ENCODE measurements at regions of chr16 and their contacts with region 1.

Region 1: GRCh38 chr16:106623-107324 is 28.7 kb downstream of the MPG start:
- DNase-seq: peak; percentile 34
- H3K4me3 ChIP-seq: no peak overlapping the region
- CTCF ChIP-seq: peak; percentile 81

Region 2: DNA sequence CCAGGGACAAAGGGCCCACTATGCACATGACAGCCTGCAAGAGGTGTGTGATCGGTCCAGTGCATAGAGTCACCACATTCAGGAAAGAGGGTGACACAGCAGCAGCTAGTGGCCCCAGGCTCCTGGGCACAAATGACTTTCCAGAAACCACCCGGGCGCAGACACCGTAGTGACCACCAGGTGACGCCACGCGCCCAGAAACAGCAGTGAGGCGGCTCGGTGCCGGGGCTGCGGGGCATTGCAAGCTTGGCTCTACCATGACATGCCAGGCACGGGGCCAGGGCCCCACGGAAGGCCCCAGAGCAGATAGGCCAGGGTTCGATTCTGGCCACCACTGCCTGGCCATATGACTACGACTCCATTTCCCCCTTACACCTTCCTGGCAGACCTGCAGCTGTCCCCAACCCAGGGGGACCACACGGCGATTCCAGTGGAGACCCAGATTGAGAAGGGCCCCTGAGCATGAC is 41.1 kb before region 1 on chr16:
- CTCF ChIA-PET with region 1: interaction called, 79 read pairs
- POLR2A ChIA-PET with region 1: no interaction called
- DNase-seq: no peak
- H3K4me3 ChIP-seq: no peak overlapping the region
- CTCF ChIP-seq: peak; percentile 96

Region 3: DNA sequence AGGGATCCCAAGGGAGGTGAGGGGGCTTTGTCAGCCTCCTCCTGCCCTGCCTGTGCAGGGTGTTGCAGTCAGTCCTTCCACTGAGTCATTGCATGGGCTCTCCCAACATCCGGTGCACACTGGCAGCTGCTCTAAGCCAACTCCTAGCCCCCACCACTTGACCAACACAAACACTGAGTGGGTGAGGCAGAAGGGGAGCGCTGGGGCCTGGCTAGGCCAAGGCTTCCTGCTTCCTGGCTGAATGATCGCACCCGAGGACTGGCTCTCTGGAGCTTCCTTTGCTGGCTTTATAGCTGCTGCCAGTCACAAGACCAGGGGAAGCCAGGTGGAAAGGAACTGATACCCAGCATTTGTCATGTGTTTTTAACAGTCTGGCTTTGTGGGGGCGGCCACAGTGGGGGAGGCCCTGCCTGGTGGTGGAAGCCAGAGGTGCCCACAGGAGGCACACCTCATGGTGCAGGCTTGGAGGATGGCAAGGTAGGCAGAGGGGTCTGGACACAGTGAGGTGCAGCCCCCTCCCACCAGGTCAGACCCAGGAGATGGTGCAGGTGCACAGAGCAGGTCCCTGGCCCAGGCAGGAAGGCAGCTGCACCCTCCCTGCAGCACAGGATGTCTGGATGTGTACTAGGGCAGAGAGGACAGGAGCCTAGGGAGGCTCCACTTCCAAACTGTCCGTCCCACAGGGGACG is 21.9 kb before region 1 on chr16:
- CTCF ChIA-PET with region 1: interaction called, 32 read pairs
- POLR2A ChIA-PET with region 1: no interaction called
- DNase-seq: peak; percentile 70
- H3K4me3 ChIP-seq: no peak overlapping the region
- CTCF ChIP-seq: no peak

Region 4: GRCh38 chr16:117379-118365 is 10.9 kb after region 1 on chr16:
- CTCF ChIA-PET with region 1: interaction called, 120 read pairs
- POLR2A ChIA-PET with region 1: no interaction called
- DNase-seq: no peak
- H3K4me3 ChIP-seq: no peak overlapping the region
- CTCF ChIP-seq: peak; percentile 70

Region 5: DNA sequence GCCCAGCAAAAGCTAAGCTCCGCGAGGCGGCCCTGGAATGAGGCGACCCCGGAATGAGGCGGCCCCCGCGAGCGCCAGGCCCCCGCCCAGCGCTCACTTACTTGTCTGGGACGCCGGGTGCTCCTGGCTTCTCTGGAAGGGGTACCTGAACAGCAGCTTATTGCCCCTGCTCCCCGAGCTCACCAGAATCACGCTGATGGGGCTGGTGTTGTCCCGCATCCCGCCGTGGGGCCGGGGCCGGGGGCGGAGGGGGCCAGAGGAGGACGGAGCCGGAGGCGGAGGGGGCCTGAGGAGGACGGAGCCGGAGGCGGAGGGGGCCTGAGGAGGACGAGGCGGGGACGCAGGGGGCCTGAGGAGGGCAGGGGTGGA is 31.3 kb after region 1 on chr16:
- CTCF ChIA-PET with region 1: interaction called, 28 read pairs
- POLR2A ChIA-PET with region 1: no interaction called
- DNase-seq: no peak
- H3K4me3 ChIP-seq: peak overlapping the region; percentile 73
- CTCF ChIP-seq: no peak

Region 6: GRCh38 chr16:200388-200787 is 93.6 kb after region 1 on chr16:
- CTCF ChIA-PET with region 1: interaction called, 10 read pairs
- POLR2A ChIA-PET with region 1: no interaction called
- DNase-seq: peak; percentile 44
- H3K4me3 ChIP-seq: no peak overlapping the region
- CTCF ChIP-seq: no peak

Region 7: GRCh38 chr16:361872-362701 is 255.3 kb after region 1 on chr16:
- CTCF ChIA-PET with region 1: interaction called, 44 read pairs
- POLR2A ChIA-PET with region 1: no interaction called
- DNase-seq: no peak
- H3K4me3 ChIP-seq: no peak overlapping the region
- CTCF ChIP-seq: peak; percentile 88